Mammary epithelial cell (primary cell): ENCODE measurements at regions of chr20 and their contacts with region 1.

Region 1: GRCh38 chr20:25188218-25188617 is 7.3 kb upstream of the ENTPD6 start:
- DNase-seq: no peak
- H3K4me3 ChIP-seq: no peak overlapping the region
- H3K27ac ChIP-seq: no peak overlapping the region
- H3K4me1 ChIP-seq: no peaks in the 10 kb centered on the region
- H3K27me3 ChIP-seq: no peaks in the 10 kb centered on the region
- CTCF ChIP-seq: no peak

Region 2: DNA sequence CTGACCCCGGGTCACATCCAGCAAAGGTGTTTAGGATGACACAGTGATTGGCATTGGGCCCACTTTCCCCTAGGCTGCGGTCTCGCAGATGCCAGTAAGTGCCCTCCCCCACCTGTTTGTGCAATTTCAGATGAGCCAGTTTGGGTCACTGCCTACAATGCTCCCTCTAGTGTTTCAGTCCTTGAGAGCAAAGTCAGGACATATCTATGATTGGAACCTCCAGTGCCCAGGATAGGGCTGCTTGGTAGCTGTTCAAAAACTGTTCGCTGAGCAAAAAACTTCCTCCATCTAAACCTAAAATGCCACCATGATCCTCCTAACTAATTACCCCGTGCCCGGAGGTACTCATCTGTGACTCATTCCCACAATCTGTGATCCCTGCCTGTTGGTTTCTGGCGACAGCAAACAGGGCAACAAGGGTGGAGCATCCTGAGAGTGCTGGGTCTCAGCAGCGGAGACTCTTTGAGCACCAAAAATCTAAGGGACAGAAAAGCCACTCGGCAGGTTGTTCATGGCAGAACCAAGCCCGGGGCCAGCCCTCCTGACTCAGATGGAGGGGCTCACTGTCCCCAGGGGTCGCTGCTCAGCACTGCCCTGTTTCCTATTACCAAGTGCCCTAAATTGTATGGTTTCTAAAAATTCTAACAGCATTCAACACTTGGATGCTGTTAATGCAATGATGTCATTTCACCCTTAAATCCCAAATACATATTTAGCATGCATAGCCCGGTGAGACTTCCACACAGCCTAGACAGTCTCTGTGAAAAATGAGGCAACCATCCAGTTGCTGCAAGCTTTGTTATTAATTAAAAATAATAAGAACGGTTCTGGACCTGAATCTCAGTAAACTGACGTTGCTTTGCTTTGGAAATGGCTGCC is 111.2 kb before region 1 on chr20:
- CTCF ChIA-PET with region 1: no interaction called
- dilution Hi-C with region 1: loop called (anchors 5 kb)
- in situ Hi-C with region 1: no loop called
- intact Hi-C with region 1: no loop called
- DNase-seq: peak; percentile 65
- H3K4me3 ChIP-seq: peak overlapping the region in 1 of 3 experiments; percentile 8
- H3K27ac ChIP-seq: no peak overlapping the region
- H3K4me1 ChIP-seq: peaks cover 25% of the 10 kb centered on the region
- H3K27me3 ChIP-seq: peaks cover 17% of the 10 kb centered on the region
- CTCF ChIP-seq: peak; percentile 30 to 58